OCI-LY7 (cell line): ENCODE measurements at regions of chr2 and their contacts with region 1.

Region 1: DNA sequence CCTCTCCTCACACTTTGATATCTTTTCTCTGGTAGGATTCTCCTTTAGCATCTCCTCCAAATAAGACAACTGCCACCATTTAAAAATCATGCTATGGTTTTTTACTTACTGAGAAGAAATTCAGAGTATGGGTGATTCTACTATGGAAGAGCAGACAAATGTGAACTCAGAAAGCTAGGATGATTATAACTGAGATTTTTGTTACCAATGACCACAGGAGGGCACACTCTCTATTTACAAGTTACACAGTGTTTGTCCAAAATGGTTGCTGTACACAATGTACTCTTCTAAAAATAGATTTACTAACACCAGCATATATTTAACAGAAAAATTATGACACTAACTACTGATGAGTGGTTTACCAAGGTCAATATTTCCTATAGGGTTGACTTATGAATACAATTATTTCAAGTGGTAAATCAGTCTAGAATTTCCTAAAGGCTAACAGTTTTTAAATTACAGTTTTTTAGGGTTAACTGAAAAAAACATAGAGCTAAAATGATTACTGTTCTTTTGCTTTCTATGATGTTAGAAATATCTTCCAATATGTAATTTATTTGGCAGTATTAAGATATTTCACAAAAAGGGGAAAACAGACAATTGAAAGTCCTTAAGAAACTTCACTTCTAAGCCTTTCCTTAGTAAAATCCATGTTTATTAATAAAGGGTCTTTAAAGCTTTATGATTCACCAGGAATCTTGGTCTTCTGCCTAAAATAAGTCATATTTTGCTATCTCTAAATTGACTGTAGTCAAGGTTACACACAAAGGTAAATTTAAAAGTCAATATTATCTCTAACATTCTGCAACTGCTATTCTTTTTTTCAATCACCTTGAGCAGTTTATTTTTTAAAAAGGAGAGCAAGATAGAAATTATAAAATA is 57.2 kb downstream of the MAP4K3 start:
- DNase-seq: peak; percentile 65
- H3K4me3 ChIP-seq: no peak overlapping the region
- H3K27ac ChIP-seq: no peak overlapping the region
- H3K4me1 ChIP-seq: peaks cover 16% of the 10 kb centered on the region
- CTCF ChIP-seq: peak; percentile 93

Region 2: DNA sequence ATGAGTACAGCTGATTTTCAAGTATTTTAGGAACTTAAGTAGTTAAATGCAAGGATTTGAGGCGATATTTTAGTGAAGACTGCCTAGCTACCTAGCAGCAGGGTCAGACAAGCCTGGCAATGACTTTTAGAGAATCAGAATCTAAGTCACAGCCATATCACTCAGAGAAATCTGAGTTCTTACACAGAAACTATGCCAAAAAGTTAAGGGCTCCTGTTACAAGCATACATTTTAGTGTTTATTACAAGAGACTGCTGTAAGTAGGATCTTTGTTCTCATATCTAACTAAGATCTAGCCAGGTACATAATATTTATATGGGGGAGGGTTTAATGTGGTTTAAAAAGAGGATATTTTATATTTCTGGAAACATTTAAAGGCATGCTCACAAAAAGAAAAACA is 19.7 kb after region 1 on chr2:
- CTCF ChIA-PET with region 1: no interaction called
- POLR2A ChIA-PET with region 1: interaction called, 14 read pairs
- intact Hi-C with region 1: no loop called
- DNase-seq: no peak
- H3K4me3 ChIP-seq: no peak overlapping the region
- H3K27ac ChIP-seq: no peak overlapping the region
- H3K4me1 ChIP-seq: peaks cover 20% of the 10 kb centered on the region
- CTCF ChIP-seq: no peak

Region 3: DNA sequence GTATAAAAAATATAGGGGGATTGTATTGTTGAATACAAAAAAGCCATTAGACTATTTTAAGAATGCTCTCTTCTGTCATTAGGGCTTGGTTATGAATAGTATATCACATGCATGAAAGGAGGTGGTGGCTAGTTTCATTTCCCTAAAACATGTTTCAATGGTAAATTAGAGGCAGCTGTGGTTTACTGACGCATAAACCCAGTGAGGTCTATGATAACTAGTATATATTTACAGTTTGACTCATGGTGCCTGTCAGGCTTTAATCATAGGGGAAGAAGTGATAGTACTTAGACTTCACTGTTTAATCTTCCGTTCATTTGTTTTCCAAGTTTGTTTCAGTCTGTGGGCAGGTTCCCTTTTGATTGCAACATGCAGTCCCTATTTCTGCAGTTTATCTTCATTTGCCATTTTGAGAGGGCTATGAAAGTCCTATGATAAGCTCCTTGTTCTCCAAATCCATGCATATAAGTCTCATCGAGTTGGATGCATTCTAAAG is 112.3 kb after region 1 on chr2:
- CTCF ChIA-PET with region 1: no interaction called
- POLR2A ChIA-PET with region 1: no interaction called
- intact Hi-C with region 1: loop called (anchors 5 kb)
- DNase-seq: peak; percentile 94
- H3K4me3 ChIP-seq: peak overlapping the region; percentile 54
- H3K27ac ChIP-seq: peak overlapping the region; percentile 92
- H3K4me1 ChIP-seq: peaks cover 63% of the 10 kb centered on the region
- CTCF ChIP-seq: no peak

Region 4: GRCh38 chr2:39530411-39530866 is 150.6 kb after region 1 on chr2:
- CTCF ChIA-PET with region 1: no interaction called
- POLR2A ChIA-PET with region 1: interaction called, 3 read pairs
- intact Hi-C with region 1: loop called (anchors 5 kb)
- DNase-seq: peak; percentile 13
- H3K4me3 ChIP-seq: no peak overlapping the region
- H3K27ac ChIP-seq: no peak overlapping the region
- H3K4me1 ChIP-seq: peaks cover 35% of the 10 kb centered on the region
- CTCF ChIP-seq: peak; percentile 53

Region 5: GRCh38 chr2:39837856-39838453 is 458.1 kb after region 1 on chr2:
- CTCF ChIA-PET with region 1: no interaction called
- POLR2A ChIA-PET with region 1: no interaction called
- intact Hi-C with region 1: loop called (anchors 5 kb)
- DNase-seq: peak; percentile 78
- H3K4me3 ChIP-seq: no peak overlapping the region
- H3K27ac ChIP-seq: no peak overlapping the region
- H3K4me1 ChIP-seq: peaks cover 17% of the 10 kb centered on the region
- CTCF ChIP-seq: peak; percentile 99